Psoas muscle (tissue), 8 donors: ENCODE measurements at regions of chr1 and their contacts with region 1.

Region 1: DNA sequence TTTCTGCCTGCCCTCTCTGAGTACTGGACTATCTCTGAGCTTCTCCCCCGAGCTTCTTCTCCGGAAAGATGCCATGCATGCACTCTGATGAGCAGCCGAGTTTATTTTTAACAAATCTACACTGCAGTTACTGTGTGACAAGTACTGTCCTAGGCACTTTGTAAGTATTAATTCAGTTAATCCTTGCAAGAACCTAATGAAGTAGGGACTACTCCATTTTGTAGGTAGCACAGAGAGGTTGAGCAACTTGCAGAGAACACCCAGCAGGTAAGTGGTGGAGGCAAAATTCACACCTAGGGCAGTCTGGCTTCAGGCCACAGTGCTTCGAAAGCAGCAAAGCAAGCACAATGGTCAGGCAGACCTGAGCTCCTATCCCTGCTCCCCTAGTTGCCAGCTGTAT is 3.8 kb upstream of the TAL1 start:
- DNase-seq: no peak
- ATAC-seq: no peak
- H3K4me3 ChIP-seq: no peak overlapping the region
- H3K27ac ChIP-seq: no peak overlapping the region
- H3K4me1 ChIP-seq: peaks cover 6% of the 10 kb centered on the region
- H3K27me3 ChIP-seq: peaks cover 7 to 38% (median 14%) of the 10 kb centered on the region in 3 donors
- CTCF ChIP-seq: no peak

Region 2: GRCh38 chr1:47219001-47219400 is 16.8 kb before region 1 on chr1:
- intact Hi-C with region 1: loop called in 1 of 2 experiments (anchors 2 kb)
- DNase-seq: no peak
- ATAC-seq: no peak
- H3K4me3 ChIP-seq: no peak overlapping the region
- H3K27ac ChIP-seq: no peak overlapping the region
- H3K4me1 ChIP-seq: no peaks in the 10 kb centered on the region
- H3K27me3 ChIP-seq: peaks cover 0 to 35% (median 6%) of the 10 kb centered on the region in 3 donors
- CTCF ChIP-seq: no peak

Region 3: GRCh38 chr1:48084826-48085225 is 849.0 kb after region 1 on chr1:
- intact Hi-C with region 1: no loop called
- DNase-seq: no peak
- ATAC-seq: no peak
- H3K4me3 ChIP-seq: no peak overlapping the region
- H3K27ac ChIP-seq: no peak overlapping the region
- H3K4me1 ChIP-seq: no peaks in the 10 kb centered on the region
- H3K27me3 ChIP-seq: peaks cover 0 to under 1% (median 0%) of the 10 kb centered on the region in 3 donors
- CTCF ChIP-seq: no peak